WTC11 (cell line): ENCODE measurements at regions of chr2 and their contacts with region 1.

Region 1: GRCh38 chr2:75076088-75076487 is 117.6 kb downstream of the POLE4 start:
- DNase-seq: no peak
- ATAC-seq: no peak
- H3K4me3 Mint-ChIP-seq: no peak overlapping the region
- H3K27ac Mint-ChIP-seq: no peak overlapping the region
- H3K4me1 Mint-ChIP-seq: peaks cover 30% of the 10 kb centered on the region
- H3K27me3 Mint-ChIP-seq: peaks cover 3% of the 10 kb centered on the region
- CTCF ChIP-seq: no peak

Region 2: DNA sequence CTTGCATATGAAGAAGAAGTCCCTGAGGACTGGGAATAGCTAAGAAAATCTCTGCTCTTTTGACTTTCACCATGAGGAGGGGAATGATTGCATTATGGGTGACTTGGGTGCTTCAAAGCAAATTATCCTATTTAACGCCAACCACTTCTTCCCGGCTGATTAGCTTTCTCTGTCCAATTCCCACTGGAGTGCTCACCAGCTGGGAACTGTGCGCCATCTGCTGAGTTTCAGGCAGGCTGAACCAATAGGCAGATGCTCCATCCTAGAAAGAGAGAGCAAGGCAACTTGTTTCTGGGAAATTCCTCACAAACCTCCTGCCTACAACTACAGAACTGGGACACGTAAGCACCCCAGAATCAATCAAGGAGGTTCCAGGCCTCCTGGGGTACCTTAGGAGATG is 68.3 kb before region 1 on chr2:
- CTCF ChIA-PET with region 1: no interaction called
- POLR2A ChIA-PET with region 1: no interaction called
- DNase-seq: no peak
- ATAC-seq: no peak
- H3K4me3 Mint-ChIP-seq: no peak overlapping the region
- H3K27ac Mint-ChIP-seq: no peak overlapping the region
- H3K4me1 Mint-ChIP-seq: no peaks in the 10 kb centered on the region
- H3K27me3 Mint-ChIP-seq: no peaks in the 10 kb centered on the region
- CTCF ChIP-seq: no peak

Region 3: DNA sequence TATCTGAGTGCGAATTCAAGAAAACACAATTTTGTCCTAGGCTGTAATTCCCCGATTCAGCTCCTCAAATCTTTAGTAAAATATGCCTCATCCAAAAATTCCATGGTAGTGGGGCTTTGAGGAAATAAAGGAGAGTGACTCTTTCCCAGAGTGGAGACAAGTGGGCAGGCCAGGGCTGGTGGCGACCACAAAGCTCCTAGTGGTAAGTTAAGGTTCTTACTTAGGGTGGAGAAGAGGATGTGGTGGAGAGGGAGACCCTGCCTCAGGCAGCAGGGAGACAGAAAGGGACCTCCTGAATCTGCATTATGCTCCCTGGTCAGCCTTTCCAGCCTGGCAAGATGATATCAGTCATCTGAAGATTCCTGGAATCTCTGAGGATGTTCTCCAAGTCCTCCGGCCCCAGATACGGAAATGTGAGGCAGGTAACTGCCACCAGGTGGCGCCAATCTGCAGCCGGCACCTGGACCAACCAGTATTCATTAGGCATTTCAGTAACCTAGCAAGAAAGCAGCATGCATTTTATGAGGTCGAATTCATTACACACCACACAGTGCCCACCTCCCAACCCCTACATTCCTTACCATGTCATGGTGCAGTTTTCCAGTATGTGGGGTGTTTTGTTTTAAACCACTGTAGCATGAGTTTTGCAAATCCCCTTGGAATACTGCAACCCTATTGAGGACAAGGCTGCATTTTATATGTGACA is 11.2 kb before region 1 on chr2:
- CTCF ChIA-PET with region 1: interaction called, 13 read pairs
- POLR2A ChIA-PET with region 1: no interaction called
- DNase-seq: peak; percentile 81
- ATAC-seq: peak; percentile 82
- H3K4me3 Mint-ChIP-seq: no peak overlapping the region
- H3K27ac Mint-ChIP-seq: no peak overlapping the region
- H3K4me1 Mint-ChIP-seq: peaks cover 25% of the 10 kb centered on the region
- H3K27me3 Mint-ChIP-seq: peaks cover 25% of the 10 kb centered on the region
- CTCF ChIP-seq: peak; percentile 84

Region 4: DNA sequence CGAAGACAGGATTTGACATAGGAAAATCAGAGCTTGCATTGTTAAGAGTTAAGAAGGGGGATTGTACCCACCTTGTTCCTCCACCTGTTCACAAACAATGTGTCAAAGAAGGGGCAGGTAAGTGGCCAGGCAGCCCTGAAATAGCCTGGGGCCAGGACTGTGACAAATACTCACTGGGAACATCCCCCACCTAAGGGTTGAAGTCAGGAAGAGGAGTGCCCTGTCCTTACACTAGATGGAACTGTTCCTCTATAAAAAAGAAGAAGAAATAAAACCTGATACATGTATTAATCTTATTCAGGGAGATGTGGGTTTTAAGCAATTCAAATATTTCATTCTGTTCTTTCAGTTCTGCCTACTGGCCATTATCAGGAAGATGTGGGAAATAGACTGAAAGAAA is 81.3 kb after region 1 on chr2:
- CTCF ChIA-PET with region 1: no interaction called
- POLR2A ChIA-PET with region 1: no interaction called
- DNase-seq: no peak
- ATAC-seq: peak; percentile 54
- H3K4me3 Mint-ChIP-seq: no peak overlapping the region
- H3K27ac Mint-ChIP-seq: no peak overlapping the region
- H3K4me1 Mint-ChIP-seq: peaks cover 24% of the 10 kb centered on the region
- H3K27me3 Mint-ChIP-seq: no peaks in the 10 kb centered on the region
- CTCF ChIP-seq: no peak